ENCODE measurements at regions of chr5 and their contacts with region 1.

Region 1: DNA sequence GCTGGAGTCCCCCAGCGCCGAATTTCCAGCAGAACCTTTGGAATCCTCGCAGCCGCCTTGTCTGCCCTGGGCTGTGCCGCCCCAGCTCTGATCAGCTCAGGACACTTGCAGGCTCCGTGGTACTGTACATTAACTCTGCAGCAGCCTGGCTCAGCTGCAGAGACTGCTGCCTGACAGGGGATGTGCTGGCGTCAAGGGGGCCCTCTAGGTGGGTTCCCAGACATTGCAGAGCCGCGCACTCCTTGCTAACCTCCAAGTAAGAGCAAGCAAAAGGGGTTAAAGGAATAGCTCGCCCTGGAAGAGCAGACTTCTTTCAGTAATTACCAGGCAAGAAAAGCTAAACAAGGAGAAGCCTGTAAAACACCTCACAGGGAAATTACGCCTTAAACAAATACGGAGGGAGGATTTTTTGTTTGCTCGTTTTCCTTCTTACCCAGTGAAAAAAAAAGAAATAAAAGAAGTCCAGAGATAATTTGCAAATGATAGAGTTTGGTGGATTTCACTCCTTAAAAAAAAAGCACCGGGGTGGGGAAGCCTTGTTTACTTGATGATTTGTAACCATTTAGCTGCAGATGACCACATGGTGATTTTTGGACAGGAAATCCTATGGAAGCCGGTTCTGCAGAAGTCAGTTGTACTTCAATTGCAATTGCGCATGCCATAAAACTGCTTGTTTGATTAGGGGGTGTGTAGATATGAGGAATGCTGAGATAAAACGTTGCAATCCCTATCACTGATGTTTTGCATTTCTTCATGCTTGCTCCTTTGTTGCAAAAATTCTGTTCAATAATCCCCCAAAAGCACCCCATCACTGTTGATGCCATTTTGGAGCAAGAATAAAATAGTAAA is 305.8 kb downstream of the PDE4D start:
- DNase-seq: peak; percentile 71 to 76
- H3K4me3 ChIP-seq: peak overlapping the region; percentile 27
- H3K4me3 Mint-ChIP-seq: peak overlapping the region; percentile 73
- H3K27ac Mint-ChIP-seq: peak overlapping the region; percentile 8
- H3K4me1 ChIP-seq: peaks cover 29% of the 10 kb centered on the region
- H3K4me1 Mint-ChIP-seq: peaks cover 15% of the 10 kb centered on the region
- H3K27me3 ChIP-seq: no peaks in the 10 kb centered on the region
- H3K27me3 Mint-ChIP-seq: no peaks in the 10 kb centered on the region
- CTCF ChIP-seq: peak; percentile 21 to 57

Region 2: GRCh38 chr5:59525959-59526358 is 61.8 kb before region 1 on chr5:
- CTCF ChIA-PET with region 1: no interaction called
- POLR2A ChIA-PET with region 1: no interaction called
- intact Hi-C with region 1: loop called (anchors 5 kb)
- DNase-seq: no peak
- H3K4me3 ChIP-seq: no peak overlapping the region
- H3K4me3 Mint-ChIP-seq: no peak overlapping the region
- H3K27ac Mint-ChIP-seq: no peak overlapping the region
- H3K4me1 ChIP-seq: peaks cover 21% of the 10 kb centered on the region
- H3K4me1 Mint-ChIP-seq: peaks cover 11% of the 10 kb centered on the region
- H3K27me3 ChIP-seq: no peaks in the 10 kb centered on the region
- H3K27me3 Mint-ChIP-seq: no peaks in the 10 kb centered on the region
- CTCF ChIP-seq: no peak

Region 3: DNA sequence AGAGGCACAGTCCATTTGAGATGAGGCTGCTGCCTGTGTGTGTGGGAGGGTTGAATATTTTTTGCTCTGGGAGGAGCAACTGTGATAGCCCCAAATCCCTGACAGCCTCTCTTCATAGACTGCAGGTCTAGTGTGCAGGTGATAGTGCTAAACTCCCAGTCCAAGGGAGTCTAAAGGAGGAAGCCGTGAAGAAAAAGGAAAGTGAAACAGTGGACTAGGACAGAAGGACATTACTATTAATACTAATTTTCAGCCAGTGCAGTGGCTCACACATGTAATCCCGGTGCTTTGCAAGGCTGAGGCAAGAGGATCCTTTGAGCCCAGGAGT is 10.8 kb after region 1 on chr5:
- CTCF ChIA-PET with region 1: no interaction called
- POLR2A ChIA-PET with region 1: no interaction called
- intact Hi-C with region 1: no loop called
- DNase-seq: no peak
- H3K4me3 ChIP-seq: no peak overlapping the region
- H3K4me3 Mint-ChIP-seq: no peak overlapping the region
- H3K27ac Mint-ChIP-seq: no peak overlapping the region
- H3K4me1 ChIP-seq: no peaks in the 10 kb centered on the region
- H3K4me1 Mint-ChIP-seq: no peaks in the 10 kb centered on the region
- H3K27me3 ChIP-seq: no peaks in the 10 kb centered on the region
- H3K27me3 Mint-ChIP-seq: peaks cover 6% of the 10 kb centered on the region
- CTCF ChIP-seq: no peak

Region 4: DNA sequence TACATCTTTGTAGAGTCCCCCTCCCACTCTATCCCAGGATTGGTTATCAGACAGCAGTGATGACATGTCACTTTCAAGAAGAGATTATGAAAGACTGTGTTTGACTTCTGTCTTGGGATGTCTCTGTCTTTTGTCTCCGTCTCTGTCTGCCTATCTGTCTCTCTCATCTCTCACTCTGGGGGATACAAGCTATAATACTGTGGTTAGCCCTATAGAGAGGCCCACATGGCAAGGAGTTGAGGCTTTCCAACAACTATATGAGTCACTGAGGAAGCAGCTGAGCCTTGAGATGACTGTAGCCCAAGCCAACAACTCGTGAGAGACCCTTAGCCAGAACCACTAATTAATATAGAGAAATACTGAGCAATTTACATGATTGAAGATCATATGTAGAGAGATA is 21.0 kb after region 1 on chr5:
- CTCF ChIA-PET with region 1: no interaction called
- POLR2A ChIA-PET with region 1: no interaction called
- intact Hi-C with region 1: no loop called
- DNase-seq: no peak
- H3K4me3 ChIP-seq: no peak overlapping the region
- H3K4me3 Mint-ChIP-seq: no peak overlapping the region
- H3K27ac Mint-ChIP-seq: no peak overlapping the region
- H3K4me1 ChIP-seq: no peaks in the 10 kb centered on the region
- H3K4me1 Mint-ChIP-seq: no peaks in the 10 kb centered on the region
- H3K27me3 ChIP-seq: no peaks in the 10 kb centered on the region
- H3K27me3 Mint-ChIP-seq: peaks cover 13% of the 10 kb centered on the region
- CTCF ChIP-seq: no peak

Region 5: GRCh38 chr5:59624898-59625297 is 37.2 kb after region 1 on chr5:
- CTCF ChIA-PET with region 1: no interaction called
- POLR2A ChIA-PET with region 1: no interaction called
- intact Hi-C with region 1: loop called (anchors 1 kb)
- DNase-seq: no peak
- H3K4me3 ChIP-seq: no peak overlapping the region
- H3K4me3 Mint-ChIP-seq: no peak overlapping the region
- H3K27ac Mint-ChIP-seq: no peak overlapping the region
- H3K4me1 ChIP-seq: peaks cover 10% of the 10 kb centered on the region
- H3K4me1 Mint-ChIP-seq: no peaks in the 10 kb centered on the region
- H3K27me3 ChIP-seq: no peaks in the 10 kb centered on the region
- H3K27me3 Mint-ChIP-seq: peaks cover 11% of the 10 kb centered on the region
- CTCF ChIP-seq: no peak

Measured in Caco-2 (cell line).